ENCODE measurements at regions of chr12 and their contacts with region 1.

Region 1: DNA sequence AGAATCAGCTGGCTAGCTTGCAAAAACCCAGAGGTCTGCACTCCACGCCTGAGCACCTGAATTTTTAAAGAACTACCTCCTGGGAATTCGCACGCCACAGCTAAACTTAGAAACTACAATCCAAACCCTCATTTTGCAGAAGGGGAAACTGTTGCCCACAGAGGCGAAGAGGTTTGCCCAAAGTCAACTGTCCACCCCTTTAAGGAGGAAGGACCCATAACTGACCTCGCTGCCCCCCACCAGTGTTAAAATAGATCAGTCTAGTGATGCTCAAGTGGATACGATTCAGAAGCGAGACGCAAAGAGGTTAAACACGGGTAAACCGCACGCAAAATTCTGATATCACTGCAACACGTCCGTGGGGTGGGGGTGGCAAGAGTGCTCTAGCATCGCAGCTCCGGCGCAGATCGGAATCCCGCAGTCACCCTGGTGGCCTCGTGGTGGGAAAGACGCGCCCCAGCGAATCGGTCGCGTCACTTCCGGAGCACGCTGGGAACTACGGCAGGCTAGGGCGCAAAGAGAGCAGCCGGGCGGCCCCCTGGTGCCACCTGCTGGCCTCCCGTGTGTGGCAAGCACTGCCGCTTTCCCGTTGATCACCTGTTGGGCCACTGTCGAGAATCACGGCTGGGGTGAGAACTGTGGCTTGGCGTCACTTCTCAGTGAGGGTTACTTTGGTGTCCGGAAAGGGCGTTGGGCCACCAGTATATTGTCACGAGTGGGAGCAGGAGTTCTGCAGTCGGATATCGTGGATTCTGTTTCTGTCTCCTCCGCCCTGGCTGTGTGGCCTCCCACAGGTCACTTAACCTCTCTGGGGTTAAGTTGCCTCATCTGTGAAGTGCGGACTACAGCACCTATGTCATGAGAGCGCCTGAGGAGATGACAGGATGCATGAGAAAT is at the start of gene ALKBH2:
- DNase-seq: peak; percentile 86 to 99 (median 94)

Region 2: DNA sequence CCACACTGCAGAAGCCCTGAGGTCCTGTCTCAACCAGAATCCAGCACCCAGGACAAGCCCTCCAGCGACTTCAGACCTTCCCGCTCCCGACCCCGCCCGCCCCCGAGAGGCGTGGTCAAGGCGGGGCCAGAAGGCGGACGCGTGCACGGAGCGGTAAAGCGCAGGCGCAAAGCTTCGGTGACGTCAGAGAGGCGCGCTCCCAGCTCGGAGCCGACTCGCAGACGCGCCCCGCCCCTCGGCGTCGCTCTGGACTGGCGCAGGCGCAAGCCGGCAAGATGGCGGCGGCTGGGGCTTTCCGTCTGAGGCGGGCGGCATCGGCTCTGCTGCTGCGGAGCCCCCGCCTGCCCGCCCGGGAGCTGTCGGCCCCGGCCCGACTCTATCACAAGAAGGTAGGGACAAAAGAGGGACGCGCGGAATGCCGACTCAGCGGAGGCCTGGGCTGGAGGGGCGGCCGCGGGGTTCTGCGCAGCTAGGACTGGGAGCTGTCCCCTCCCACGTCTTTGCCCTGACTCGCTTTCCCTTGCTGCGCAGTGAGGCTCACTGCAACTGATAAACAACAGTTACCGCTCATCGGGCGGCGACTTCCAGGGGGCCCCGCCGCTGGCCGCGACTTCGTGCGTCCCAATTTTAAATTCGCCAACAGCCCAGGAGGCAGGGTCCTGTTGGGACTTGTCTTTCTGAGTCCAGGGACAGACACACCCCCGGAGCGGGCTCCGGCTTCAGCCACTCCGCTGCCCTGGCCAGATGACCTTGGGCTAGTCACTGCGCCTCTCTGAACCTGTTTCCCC is 530.7 kb before region 1 on chr12 and contains the start of gene ISCU:
- intact Hi-C with region 1: loop called (anchors 5 kb)
- DNase-seq: peak; percentile 96 to 100 (median 98)

Region 3: DNA sequence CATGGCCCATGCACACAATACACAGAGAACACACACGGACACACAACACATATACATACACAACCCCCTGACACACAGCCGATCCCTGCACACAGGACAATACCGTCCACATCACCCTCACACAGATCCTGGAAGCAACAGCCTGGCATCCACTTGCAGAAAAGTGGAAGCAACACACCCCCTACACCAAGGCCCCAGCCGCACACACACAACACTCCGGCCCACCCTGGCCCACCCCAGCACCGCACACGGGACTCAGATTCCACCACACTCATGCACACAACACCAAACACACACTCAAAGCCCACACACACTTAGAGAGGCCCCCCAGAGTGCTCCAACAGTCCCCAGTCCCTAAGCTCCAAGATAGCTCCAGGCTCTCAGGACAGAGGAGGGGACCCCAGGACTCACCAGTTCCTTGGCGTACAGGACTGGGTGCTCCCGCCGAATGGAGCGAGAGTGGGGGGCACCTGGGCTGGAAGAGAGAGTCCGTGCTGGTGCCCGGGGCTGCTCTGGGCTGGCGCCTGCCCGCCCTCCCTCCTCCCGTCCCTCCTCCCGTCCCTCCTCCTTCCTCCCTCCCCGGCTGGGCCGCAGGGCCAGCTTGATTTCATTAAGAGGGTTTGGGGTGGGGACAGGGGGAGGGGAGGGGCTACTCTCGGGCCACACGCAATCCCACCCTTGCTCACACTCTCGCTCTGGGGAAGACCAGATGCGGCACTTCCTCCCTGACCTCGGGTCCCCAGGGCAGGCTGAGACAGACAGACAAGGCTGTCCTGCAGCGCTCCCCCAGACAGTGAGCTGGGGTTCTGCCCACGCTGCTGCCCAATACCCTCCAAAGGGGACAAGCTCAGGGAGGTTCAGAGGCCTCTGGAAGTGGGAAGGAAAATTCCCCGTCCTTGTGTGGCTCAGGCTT is 495.5 kb before region 1 on chr12 and contains the start of gene TMEM119:
- intact Hi-C with region 1: no loop called
- DNase-seq: peak in 2 of 10 donors; percentile 71 to 86

Region 4: GRCh38 chr12:108826101-108826806 is 267.0 kb before region 1 on chr12:
- intact Hi-C with region 1: loop called (anchors 10 kb)
- DNase-seq: peak in 5 of 10 donors; percentile 50 to 91 (median 57)

Region 5: DNA sequence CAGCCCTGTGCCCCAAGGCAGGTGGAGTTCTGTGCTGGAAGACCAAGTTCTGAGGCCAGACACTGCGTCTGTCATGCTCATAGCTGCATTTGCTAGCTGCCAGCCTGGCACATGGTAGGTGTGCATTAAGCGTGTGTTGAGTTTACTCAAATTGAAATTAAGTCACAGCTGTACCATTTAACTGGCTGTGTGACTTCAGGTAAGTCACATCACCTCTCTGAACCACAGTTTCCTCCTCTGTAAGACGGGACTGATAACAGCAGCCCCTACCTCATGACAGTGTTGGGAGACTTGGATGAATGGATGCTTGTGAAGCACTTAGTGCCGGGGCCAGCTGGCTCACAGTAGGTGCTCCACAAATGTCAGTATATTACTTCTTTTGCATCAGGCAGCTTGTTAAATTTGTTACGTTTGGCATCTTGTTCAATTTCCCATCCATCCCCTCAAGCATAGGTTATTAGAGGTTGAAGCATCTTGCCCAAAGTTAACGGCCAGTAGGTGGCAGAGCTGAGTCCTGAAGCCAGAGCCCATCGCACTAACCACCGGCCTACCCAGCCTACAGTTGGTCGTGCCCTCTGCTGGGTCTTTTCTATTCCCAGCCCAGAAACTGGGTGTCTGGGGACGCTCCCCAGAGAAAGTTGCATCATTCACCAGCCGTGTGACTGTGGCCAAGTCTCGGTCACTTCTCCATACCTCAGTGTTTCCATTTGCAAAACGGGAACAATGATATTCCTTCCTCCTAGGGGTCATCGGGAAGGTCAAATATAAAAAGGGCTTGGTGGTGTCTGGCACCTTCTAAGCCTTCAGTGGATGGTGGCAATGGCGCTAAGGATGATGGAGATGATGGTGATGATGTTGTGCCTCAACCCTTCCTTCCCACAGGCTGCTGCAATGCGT is 208.9 kb before region 1 on chr12:
- intact Hi-C with region 1: loop called (anchors 1 kb)
- DNase-seq: peak in 3 of 10 donors; percentile 14 to 33 (median 29)

Region 6: DNA sequence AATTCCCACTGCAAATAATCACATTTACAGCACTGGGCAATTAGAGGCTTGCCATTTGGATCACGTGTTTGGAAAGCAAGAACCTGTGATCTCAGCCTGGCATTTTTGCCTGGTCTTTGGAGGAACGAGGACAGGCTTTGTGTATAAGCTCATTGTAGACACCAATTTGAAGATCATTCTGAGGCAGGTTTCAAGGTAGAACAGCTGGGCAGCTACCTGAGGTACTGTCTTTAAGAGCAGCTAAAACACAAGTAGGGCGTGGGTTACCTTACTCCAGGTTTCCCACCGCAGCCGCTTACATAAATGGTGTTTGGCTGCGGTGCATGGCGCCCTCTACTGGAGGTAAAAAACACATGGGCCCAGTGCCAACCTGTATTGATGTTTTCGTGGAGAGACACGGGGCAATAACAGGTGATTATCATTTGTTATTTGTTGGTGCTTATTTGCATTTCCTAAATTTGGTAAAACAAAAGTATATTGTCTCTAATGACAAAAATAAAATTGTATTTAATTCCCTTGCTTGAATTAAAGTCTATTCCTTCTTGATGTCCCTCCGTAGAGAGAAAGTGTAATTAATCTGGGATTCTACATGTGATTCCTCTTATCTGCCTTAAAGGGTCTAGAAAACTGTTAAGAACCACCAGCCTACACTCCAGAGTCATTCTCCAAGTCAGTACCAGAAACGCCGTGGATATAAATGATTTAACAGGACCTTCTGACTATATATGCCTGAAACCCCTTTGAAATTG is 142.1 kb before region 1 on chr12:
- intact Hi-C with region 1: loop called (anchors 5 kb)
- DNase-seq: peak; percentile 38 to 93 (median 68)

Region 7: GRCh38 chr12:109020796-109021380 is 72.4 kb before region 1 on chr12 and contains the start of gene SVOP:
- intact Hi-C with region 1: loop called (anchors 2 kb)
- DNase-seq: peak; percentile 80 to 98 (median 86)

Region 8: GRCh38 chr12:109053382-109054123 is 39.7 kb before region 1 on chr12:
- intact Hi-C with region 1: loop called (anchors 2 kb)
- DNase-seq: no peak

Measured in posterior cingulate gyrus (tissue), 11 donors.